ENCODE measurements at regions of chr9 and their contacts with region 1.

Region 1: DNA sequence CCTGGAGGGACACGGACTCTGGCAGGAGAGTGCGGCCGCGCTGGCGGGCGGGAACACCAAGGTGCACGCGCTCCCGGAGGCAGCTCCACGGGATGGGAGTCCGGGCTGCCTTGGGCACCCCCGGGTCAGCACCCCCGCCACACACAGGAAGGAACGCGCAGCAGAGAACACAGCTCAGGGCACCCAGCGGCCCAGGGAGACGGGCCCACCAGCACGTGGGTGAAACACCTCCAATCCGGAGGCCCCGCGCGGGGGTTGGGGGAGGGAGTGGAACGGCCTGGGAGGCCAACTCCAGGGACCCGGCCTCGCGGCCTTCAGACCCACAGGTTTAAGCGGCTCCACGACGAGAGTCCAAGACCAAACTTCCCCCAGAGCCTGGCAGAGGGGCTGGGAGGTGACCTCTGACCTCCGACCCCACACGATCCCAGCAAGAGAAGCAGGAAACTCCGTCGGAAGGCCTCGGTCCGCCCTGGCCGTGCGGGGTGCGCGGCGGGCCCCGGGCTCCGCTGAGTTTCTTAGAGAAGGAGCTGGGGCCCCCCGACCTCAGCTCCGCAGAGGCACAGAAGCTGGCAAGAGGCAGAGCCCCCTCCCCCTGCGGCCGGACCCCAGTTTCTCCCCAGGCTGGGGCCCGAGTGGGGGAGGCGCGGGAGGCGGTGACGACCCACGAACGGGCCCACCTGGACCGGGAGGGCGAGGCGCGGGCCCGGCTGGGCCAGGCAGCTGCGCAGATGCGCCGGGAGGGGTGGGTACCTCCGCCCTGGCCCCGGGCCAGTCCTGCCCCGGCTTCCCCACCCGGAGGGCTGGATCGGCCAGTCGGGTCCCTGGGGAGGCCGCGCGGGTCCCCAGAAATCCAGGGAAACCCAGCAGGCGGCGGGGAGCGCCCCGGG is 851 bp downstream of the NACC2 start:
- DNase-seq: peak; percentile 77
- H3K4me3 Mint-ChIP-seq: peak overlapping the region; percentile 68
- H3K27ac Mint-ChIP-seq: no peak overlapping the region
- H3K4me1 Mint-ChIP-seq: peaks cover 4% of the 10 kb centered on the region
- H3K27me3 Mint-ChIP-seq: peaks cover 15% of the 10 kb centered on the region

Region 2: DNA sequence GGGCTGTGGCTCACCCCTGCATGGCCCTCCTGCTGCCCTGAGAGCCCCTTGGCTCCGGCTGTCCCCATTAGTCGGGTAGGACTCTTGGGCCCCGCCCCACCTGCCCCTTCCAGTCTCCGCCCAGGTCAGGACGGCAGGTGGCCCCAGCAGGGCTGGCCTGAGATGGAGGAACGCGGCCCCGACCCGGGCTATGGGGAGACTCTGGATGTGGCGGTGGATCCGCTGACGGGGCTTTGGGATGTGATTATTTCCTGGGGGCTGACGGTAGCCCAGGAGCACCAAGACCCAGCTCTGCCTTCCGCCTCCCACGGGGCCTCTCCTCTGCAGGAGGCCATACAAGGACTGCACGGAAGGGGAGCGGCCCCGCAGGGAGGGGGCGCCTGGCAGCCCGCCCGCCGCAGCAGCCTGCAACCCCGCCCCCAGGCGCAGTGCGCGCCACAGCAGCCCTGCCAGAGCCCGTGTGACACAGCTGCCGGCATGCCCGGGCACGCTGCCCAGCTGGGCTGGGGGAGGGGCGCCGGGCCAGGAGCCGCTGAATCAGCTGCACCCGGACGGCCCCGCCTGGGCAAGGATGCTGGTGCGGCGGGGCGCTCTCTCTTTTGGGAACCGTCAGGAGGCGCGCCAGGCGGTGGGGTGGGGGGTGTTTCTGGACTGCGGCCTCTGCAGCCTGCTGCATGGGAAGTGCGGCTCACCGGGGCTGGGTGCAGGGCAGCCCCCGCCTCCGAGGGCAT is 15.3 kb after region 1 on chr9:
- intact Hi-C with region 1: loop called (anchors 1 kb)
- DNase-seq: peak; percentile 97
- H3K4me3 Mint-ChIP-seq: peak overlapping the region; percentile 89
- H3K27ac Mint-ChIP-seq: peak overlapping the region; percentile 89
- H3K4me1 Mint-ChIP-seq: peaks cover 41% of the 10 kb centered on the region
- H3K27me3 Mint-ChIP-seq: no peaks in the 10 kb centered on the region

Region 3: DNA sequence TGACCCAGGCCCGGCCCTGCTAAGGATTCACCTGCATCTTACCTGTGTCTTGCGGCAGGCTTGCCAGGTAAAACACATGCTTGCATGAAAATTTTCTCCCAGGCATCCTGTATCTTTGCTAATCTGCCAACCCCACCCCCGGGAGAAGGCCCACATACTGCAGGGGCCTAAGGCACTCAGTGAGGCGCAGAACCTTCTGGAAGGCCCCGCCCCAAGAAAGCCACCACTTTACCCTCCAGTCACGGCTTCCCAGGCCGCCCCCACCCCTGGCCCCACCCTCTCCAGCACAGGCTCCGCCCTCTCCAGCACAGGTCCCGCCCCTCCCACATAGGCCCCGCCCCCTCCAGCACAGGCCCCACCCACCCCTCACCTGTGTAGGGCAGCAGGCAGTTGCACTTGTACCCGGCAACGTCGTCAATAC is 418.4 kb after region 1 on chr9:
- intact Hi-C with region 1: no loop called
- DNase-seq: no peak
- H3K4me3 Mint-ChIP-seq: no peak overlapping the region
- H3K27ac Mint-ChIP-seq: no peak overlapping the region
- H3K4me1 Mint-ChIP-seq: no peaks in the 10 kb centered on the region
- H3K27me3 Mint-ChIP-seq: no peaks in the 10 kb centered on the region